Activated CD8-positive, alpha-beta T cell treated with anti-CD3 and anti-CD28 coated beads, Interleukin-2, amount 10 ng/mL, durations not matched to agents 7 days and 5 days (primary cell): ENCODE measurements at regions of chr12 and their contacts with region 1.

Region 1: GRCh38 chr12:120292661-120293531 is at the start of gene RNU4-1:
- DNase-seq: peak; percentile 88
- ATAC-seq: peak; percentile 50
- H3K4me3 Mint-ChIP-seq: no peak within 1 kb of the TSS
- H3K27ac Mint-ChIP-seq: no peak within 1 kb of the TSS
- H3K4me1 Mint-ChIP-seq: peaks cover 5% of the 10 kb centered on the region
- H3K27me3 Mint-ChIP-seq: no peaks in the 10 kb centered on the region
- total RNA-seq, gene RNU4-1: 1,409 to 2,335 TPM

Region 2: DNA sequence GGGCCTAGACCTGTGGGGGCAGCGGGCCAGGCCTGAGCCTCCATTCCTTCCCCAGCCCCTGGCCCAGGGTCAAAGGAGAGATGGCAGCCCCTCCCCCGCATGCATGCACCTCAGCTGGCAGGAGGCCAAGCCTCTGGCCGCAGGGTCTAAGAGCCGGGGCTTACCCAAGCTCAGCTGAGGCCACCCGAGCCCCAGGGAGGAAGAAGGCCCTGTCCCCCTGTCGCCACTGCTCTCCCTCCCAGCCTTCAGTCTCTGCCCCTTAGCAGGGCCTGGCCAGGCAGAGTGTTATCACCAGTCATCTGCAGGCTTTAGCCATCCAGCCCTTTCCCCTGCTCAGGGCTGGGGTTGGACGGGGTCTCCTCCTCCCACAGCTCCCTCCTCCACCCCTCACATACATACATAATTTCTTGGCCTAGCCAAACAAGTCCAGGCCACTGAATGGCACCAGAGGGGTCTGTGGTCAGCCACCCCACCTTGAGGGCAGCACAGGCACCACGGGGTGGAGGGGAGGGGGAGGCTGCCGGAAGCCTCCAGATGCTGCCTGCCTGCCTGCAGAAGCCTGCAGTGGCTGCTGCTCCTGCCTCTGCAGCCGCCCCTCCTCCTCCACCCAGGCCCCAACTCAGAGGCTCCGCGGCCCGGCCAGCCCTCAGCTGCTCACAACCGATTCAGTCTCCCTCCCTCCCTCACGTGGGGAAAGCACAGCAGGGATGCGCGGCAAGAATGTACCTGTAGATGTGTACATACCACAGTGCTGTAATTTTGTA is 199.1 kb before region 1 on chr12:
- CTCF ChIA-PET with region 1: no interaction called
- POLR2A ChIA-PET with region 1: no interaction called
- DNase-seq: no peak
- ATAC-seq: peak; percentile 22
- H3K4me3 Mint-ChIP-seq: no peak overlapping the region
- H3K27ac Mint-ChIP-seq: no peak overlapping the region
- H3K4me1 Mint-ChIP-seq: peaks cover 5% of the 10 kb centered on the region
- H3K27me3 Mint-ChIP-seq: no peaks in the 10 kb centered on the region

Region 3: DNA sequence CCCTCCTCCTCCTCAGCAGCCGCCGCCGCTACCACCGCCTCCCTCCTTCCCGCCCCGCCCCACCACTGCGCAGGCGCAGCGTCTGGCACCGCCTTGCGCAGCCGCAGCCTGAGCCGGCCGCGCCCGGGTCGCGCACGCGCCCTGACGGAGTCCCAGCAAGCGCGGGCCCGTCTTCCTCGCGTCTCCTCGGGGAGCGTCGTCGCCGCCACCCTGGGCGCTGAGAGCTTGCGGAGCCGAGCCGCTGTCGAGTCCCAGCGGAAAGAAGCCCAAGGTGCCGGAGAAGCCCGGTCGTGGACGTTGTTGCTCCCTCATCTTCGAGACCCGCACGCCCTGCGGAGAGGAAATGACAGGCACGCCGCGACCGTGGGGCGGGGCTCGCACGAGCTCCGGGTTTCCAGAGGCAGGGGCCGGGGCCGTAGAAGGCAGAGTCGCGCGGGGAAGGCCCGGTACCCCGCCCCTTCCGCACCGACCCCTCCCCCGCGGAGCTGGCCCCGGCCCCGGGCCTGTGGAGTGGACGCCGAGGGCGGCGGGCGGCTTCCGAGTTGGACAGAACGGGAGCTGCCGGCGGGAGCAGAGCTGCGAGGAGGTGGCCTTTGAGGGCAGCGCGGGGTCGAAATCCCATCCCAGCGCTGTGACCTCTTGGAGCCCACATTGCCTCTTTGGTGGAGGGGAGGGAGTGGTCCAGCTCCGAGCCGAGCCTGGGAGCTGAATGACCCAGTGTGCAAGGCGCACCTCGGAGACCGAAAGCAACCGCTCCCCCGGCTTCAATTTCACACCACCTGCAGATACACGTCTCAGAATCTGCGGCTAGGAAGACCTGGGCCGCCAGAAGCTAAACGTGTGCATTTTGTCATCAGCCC is 175.9 kb before region 1 on chr12:
- CTCF ChIA-PET with region 1: no interaction called
- POLR2A ChIA-PET with region 1: interaction called, 71 read pairs
- DNase-seq: peak; percentile 98
- ATAC-seq: peak; percentile 83
- H3K4me3 Mint-ChIP-seq: peak overlapping the region; percentile 81
- H3K27ac Mint-ChIP-seq: peak overlapping the region; percentile 78
- H3K4me1 Mint-ChIP-seq: peaks cover 78% of the 10 kb centered on the region
- H3K27me3 Mint-ChIP-seq: no peaks in the 10 kb centered on the region

Region 4: GRCh38 chr12:120167529-120168095 is 125.3 kb before region 1 on chr12:
- CTCF ChIA-PET with region 1: no interaction called
- POLR2A ChIA-PET with region 1: no interaction called
- DNase-seq: no peak
- ATAC-seq: no peak
- H3K4me3 Mint-ChIP-seq: no peak overlapping the region
- H3K27ac Mint-ChIP-seq: no peak overlapping the region
- H3K4me1 Mint-ChIP-seq: peaks cover 6% of the 10 kb centered on the region
- H3K27me3 Mint-ChIP-seq: no peaks in the 10 kb centered on the region

Region 5: GRCh38 chr12:120211904-120212283 is 81.0 kb before region 1 on chr12:
- CTCF ChIA-PET with region 1: no interaction called
- POLR2A ChIA-PET with region 1: interaction called, 12 read pairs
- DNase-seq: no peak
- ATAC-seq: no peak
- H3K4me3 Mint-ChIP-seq: no peak overlapping the region
- H3K27ac Mint-ChIP-seq: no peak overlapping the region
- H3K4me1 Mint-ChIP-seq: peaks cover 1% of the 10 kb centered on the region
- H3K27me3 Mint-ChIP-seq: no peaks in the 10 kb centered on the region

Region 6: GRCh38 chr12:120249875-120250795 is 42.8 kb before region 1 on chr12:
- CTCF ChIA-PET with region 1: no interaction called
- POLR2A ChIA-PET with region 1: interaction called, 113 read pairs
- DNase-seq: peak; percentile 72
- ATAC-seq: peak; percentile 10
- H3K4me3 Mint-ChIP-seq: peak overlapping the region; percentile 67
- H3K27ac Mint-ChIP-seq: peak overlapping the region; percentile 90
- H3K4me1 Mint-ChIP-seq: peaks cover 77% of the 10 kb centered on the region
- H3K27me3 Mint-ChIP-seq: peaks cover 10% of the 10 kb centered on the region

Region 7: DNA sequence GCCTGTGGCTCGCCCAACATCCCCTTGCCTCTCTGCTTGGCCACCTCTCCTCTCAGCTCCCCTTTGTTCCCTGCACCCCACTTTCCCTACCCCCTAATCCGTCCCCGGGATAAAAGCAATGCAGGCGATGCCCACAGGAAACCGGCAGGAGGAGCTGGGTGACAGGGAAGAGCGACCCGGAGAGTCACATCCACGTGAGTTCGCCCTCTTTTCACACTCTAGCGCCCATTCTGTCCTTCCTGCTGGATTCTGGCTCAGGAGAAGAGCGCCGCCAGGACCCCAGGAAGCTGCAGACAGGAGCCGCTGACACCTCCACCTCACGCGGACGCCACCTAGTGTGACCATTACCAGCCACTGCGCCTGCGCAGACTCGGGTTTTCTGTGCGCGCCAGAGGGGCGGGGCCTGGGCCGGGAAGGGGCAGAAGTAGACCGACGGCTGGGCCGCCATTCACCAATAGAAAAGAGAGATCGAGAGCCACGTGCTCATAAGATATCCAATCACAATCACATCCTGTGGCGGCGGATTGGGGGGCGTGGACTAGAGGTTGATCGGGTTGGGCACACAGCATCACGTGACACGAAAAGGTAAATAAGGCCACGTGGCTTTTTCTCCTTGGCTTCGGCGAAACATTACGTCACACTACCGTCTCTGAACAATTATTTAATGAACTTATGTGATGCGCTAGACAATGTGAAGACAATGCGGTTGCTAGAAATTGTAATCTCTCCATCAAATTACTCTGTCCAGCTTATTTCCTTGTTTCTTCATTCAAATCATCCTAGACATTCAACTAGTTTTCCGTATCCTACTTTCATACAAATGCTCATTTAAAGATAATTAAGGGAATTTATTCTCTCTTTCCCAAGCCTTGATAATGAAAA is 24.6 kb after region 1 on chr12:
- CTCF ChIA-PET with region 1: interaction called, 10 read pairs
- POLR2A ChIA-PET with region 1: interaction called, 107 read pairs
- DNase-seq: peak; percentile 100
- ATAC-seq: peak; percentile 100
- H3K4me3 Mint-ChIP-seq: peak overlapping the region; percentile 83
- H3K27ac Mint-ChIP-seq: peak overlapping the region; percentile 86
- H3K4me1 Mint-ChIP-seq: peaks cover 13% of the 10 kb centered on the region
- H3K27me3 Mint-ChIP-seq: no peaks in the 10 kb centered on the region

Region 8: DNA sequence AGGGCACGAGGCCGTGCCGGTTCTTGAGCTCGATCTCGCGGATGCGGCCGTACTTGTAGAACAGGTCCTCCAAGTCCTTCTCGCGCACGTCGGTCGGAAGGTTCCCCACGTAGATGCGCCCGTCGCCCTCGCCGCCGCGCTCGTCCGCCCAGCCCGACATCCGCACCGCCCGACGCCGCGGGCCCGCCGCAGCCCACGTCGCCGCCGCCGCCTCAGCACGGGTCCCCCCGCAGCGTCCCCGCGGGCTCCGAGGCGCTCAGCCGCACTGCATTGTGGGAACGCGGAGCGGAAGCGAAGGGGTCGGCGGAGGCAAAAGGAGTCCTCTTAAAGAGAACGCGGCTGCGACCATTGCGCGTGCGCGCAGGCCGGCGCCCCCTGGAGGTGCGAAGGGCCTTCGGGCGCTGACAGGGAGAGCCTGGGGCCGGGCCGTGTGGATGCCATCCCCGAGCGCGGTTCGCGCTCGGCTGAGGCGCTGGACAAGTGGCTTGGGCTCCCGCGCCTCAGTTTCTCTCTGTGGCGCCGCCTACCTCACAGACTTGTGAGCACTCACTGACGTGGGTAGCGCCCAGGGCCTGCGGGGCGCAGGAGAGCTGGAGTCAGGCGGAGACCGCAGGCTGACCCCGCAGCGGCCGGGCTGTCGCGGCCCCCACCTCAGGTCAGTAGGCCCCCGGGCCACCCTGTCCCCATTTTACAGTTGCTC is 176.7 kb after region 1 on chr12 and contains the start of gene SRSF9:
- CTCF ChIA-PET with region 1: interaction called, 3 read pairs
- POLR2A ChIA-PET with region 1: interaction called, 27 read pairs
- DNase-seq: peak; percentile 97
- ATAC-seq: peak; percentile 96
- H3K4me3 Mint-ChIP-seq: peak within 1 kb of the TSS; percentile 96
- H3K27ac Mint-ChIP-seq: peak within 1 kb of the TSS; percentile 87
- H3K4me1 Mint-ChIP-seq: peaks cover 40% of the 10 kb centered on the region
- H3K27me3 Mint-ChIP-seq: no peaks in the 10 kb centered on the region
- total RNA-seq, gene SRSF9: 199 to 219 TPM